ENCODE measurements at regions of chr2 and their contacts with region 1.

Region 1: GRCh38 chr2:229800997-229801754 is 86.8 kb upstream of the DNER start:
- DNase-seq: peak; percentile 72 to 84 (median 76)
- H3K4me3 ChIP-seq: no peak overlapping the region
- H3K27ac ChIP-seq: no peak overlapping the region
- H3K4me1 ChIP-seq: no peaks in the 10 kb centered on the region
- H3K27me3 ChIP-seq: no peaks in the 10 kb centered on the region

Region 2: DNA sequence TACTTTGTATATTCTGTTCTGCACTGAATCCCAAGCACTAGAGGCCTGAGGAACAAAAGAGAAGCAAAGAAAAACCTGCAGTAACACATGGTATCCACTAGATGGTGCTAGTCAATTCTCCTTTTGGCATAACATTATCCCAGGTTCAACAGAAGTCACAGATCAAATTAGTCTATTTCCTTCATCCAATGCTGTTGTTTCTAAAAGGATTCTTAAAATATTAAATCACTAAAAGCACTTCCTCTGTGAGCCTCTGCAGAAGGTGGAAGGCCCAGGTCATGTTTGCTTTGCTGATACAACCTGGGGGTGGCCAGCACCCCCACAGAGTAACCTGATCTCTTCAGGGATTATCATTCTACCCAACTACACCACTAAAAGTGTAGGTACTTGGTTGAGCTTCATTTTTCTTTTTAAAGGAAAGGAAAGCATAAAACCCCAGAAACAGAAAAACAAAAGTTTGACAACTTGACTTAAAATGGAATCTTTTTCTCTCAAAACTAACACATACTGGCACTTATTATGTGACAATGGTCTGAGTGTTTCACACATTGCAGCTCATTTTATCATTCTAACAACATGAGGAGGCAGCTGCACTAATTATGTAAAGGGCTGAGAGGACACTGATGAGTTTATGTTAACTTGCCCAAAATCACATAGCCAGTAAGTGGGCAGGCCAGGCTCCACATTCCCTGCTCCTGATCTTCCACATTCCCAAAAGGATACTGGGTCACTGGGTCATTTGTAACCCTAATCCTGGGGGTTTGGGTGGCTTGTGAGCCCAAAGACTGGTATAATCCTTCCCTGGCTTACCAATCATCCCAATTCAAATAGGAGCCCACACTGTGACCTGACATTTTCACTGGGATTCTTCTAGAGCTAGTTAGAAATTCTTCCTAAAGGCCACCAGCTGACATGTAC is 20.1 kb before region 1 on chr2:
- CTCF ChIA-PET with region 1: interaction called, 47 read pairs
- POLR2A ChIA-PET with region 1: no interaction called
- DNase-seq: peak; percentile 25 to 64 (median 59)
- H3K4me3 ChIP-seq: no peak overlapping the region
- H3K27ac ChIP-seq: peak overlapping the region in 1 of 2 experiments; percentile 44
- H3K4me1 ChIP-seq: peaks cover 0 to 5% (median 2%) of the 10 kb centered on the region in 4 experiments
- H3K27me3 ChIP-seq: no peaks in the 10 kb centered on the region

Region 3: DNA sequence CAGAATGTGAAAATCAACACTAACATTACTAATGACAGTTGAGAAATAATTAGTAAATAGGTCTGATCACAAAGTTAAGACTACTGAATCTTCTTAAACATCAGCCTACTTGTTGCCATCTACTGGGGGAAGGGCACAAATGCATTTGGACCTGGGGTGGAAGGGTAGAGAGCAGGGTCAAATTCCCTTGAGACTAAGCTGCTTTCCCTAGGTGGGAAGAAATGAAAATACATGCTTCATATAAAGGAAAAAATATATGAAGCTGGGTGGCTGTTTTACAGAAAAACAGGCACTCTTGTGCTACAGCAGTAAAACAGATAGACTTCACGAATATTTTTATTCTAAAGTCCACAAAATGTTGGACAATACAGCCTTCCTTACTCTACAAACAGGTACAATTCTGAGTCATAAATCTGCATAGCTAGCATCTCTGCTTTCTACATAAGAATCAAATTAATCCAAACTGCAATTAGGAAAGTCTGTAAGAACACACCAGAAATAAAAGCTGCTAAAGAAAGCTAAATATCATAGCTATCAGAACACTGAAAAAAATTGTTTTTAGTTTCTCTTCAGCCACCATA is 109.7 kb after region 1 on chr2:
- CTCF ChIA-PET with region 1: interaction called, 34 read pairs
- POLR2A ChIA-PET with region 1: no interaction called
- DNase-seq: peak; percentile 46 to 59 (median 57)
- H3K4me3 ChIP-seq: no peak overlapping the region
- H3K27ac ChIP-seq: no peak overlapping the region
- H3K4me1 ChIP-seq: peaks cover 9 to 26% (median 13%) of the 10 kb centered on the region in 4 experiments
- H3K27me3 ChIP-seq: no peaks in the 10 kb centered on the region

Region 4: GRCh38 chr2:229971159-229971790 is 170.1 kb after region 1 on chr2:
- CTCF ChIA-PET with region 1: no interaction called
- POLR2A ChIA-PET with region 1: no interaction called
- DNase-seq: no peak
- H3K4me3 ChIP-seq: no peak overlapping the region
- H3K27ac ChIP-seq: no peak overlapping the region
- H3K4me1 ChIP-seq: no peaks in the 10 kb centered on the region
- H3K27me3 ChIP-seq: no peaks in the 10 kb centered on the region

Measured in common myeloid progenitor, CD34-positive (primary cell).